ENCODE measurements at regions of chr19 and their contacts with region 1.

Region 1: DNA sequence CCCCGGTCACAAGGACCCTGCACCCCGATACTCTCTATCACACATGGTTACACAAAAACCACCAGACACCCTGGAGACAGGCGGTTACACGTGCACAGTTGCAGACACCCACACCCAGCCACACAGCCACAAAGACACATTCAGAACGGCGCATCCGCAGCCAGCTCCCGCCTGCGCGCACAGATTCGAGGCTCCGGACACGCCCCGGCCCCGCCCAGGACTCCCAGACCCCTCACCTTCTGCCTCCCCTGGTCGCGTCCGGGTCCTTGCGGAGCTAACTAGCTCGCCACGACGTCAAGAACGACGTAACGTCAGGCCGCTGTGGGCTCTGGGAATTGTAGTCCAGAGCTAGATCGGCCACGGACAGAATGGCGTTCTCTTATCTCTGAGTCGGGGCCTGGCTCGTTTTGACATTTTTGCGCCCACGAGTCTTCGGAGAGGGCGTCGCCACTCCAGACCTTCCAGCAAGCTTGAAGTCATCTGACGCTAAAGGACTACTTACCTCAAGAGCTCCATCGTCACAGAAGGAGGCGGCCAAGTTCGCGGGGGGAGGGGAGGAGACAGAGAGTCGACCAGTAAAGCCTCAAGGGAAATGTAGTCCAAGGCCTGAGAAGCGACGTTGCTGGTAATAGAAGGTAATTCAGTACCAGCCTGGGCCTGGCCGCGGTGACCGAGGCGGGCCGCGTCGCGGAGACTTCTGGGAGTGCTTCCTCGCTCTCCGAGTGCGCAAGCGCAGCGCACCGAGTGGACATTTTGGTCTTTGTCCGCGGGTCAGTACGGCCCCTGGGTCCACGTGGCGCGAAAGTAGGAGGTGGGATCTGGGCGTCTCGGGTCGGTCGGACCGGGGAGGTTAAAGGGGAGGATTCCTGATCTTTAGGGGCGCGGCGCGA is at the starts of genes ZNF146 and ZNF565:
- DNase-seq: peak; percentile 98
- H3K4me3 ChIP-seq: peak within 1 kb of the TSS; percentile 65 to 87 (median 75)
- H3K27ac ChIP-seq: peak within 1 kb of the TSS; percentile 90 to 93 (median 92)
- H3K4me1 ChIP-seq: peaks cover 4 to 17% (median 10%) of the 10 kb centered on the region in 4 donors
- H3K27me3 ChIP-seq: no peaks in the 10 kb centered on the region
- CTCF ChIP-seq: peak in 3 of 5 experiments; percentile 21 to 66 (median 57)
- EP300 ChIP-seq: no peak
- POLR2A ChIP-seq: peak; percentile 78
- total RNA-seq, gene ZNF146: 10.8 to 105 (median 52.2) TPM
- total RNA-seq, gene ZNF565: 1.00 to 4.1 (median 4.0) TPM in 3 of 4 donors, not detected in the other

Region 2: GRCh38 chr19:36489118-36489919 is 274.7 kb after region 1 on chr19 and contains the start of gene ZNF566:
- in situ Hi-C with region 1: loop called in 1 of 4 experiments (anchors 25 kb)
- intact Hi-C with region 1: no loop called
- DNase-seq: peak; percentile 92
- H3K4me3 ChIP-seq: peak within 1 kb of the TSS; percentile 67 to 77 (median 74)
- H3K27ac ChIP-seq: peak within 1 kb of the TSS; percentile 95 to 96 (median 95)
- H3K4me1 ChIP-seq: peaks cover 7 to 17% (median 12%) of the 10 kb centered on the region in 4 donors
- H3K27me3 ChIP-seq: no peaks in the 10 kb centered on the region
- CTCF ChIP-seq: no peak
- EP300 ChIP-seq: no peak
- POLR2A ChIP-seq: peak; percentile 57
- total RNA-seq, gene ZNF566: 1.9 to 15.1 (median 10.0) TPM